HCT116 (cell line): ENCODE measurements at regions of chr6 and their contacts with region 1.

Region 1: GRCh38 chr6:12844290-12845223 is 128.0 kb downstream of the PHACTR1 start:
- DNase-seq: peak; percentile 10
- ATAC-seq: peak; percentile 57; the same call in 1 of the 2 replicates
- H3K4me3 ChIP-seq: no peak overlapping the region
- H3K27ac ChIP-seq: no peak overlapping the region
- H3K4me1 ChIP-seq: no peaks in the 10 kb centered on the region
- H3K27me3 ChIP-seq: peaks cover 41% of the 10 kb centered on the region; the same call in 1 of the 2 replicates
- CTCF ChIP-seq: peak; percentile 34 to 75 (median 53); a peak in 5 of 6 replicates
- POLR2A ChIP-seq: no peak
- RAD21 ChIP-seq: peak; percentile 32

Region 2: DNA sequence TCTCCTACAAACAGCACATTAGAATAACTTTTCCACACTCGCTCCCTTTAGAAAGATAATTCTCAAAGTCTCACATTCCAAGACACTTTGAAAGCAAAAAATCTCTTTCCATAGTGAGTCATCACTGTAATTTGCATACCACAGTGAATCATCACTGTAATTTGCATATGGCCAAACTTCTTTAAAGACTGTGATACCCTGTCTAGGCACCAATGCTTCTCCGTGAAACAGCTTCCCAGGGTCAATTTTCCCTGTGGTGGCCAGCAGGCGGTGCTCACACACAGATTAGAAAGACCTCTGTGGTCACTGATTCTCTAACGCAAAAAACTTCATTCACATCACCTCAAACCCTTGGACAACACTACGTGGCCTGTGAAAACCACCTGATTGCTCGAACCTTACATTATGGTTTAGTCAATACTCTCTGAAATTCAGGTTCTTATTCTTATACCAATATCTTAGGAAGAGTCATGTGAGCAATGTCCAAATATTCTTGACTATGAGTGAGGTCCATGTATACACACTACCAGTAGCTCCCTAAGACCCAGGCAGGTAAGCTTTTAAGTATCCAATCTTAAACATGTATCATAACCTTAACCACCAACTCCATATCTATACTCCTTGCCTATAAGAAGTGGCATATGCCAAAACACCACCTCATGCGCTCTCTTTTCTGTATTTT is 206.5 kb before region 1 on chr6:
- CTCF ChIA-PET with region 1: interaction called, 3 read pairs
- POLR2A ChIA-PET with region 1: no interaction called
- RAD21 ChIA-PET with region 1: no interaction called
- intact Hi-C with region 1: loop called (anchors 1 kb)
- DNase-seq: peak; percentile 69
- ATAC-seq: peak; percentile 99
- H3K4me3 ChIP-seq: no peak overlapping the region
- H3K27ac ChIP-seq: no peak overlapping the region
- H3K4me1 ChIP-seq: 0 out of 4 replicates have a peak, but pooled peaks cover 0 to 6% of the 10 kb centered on the region in 2 experiments
- H3K27me3 ChIP-seq: no peaks in the 10 kb centered on the region
- CTCF ChIP-seq: peak; percentile 66 to 89 (median 77)
- POLR2A ChIP-seq: no peak
- RAD21 ChIP-seq: peak; percentile 82

Region 3: DNA sequence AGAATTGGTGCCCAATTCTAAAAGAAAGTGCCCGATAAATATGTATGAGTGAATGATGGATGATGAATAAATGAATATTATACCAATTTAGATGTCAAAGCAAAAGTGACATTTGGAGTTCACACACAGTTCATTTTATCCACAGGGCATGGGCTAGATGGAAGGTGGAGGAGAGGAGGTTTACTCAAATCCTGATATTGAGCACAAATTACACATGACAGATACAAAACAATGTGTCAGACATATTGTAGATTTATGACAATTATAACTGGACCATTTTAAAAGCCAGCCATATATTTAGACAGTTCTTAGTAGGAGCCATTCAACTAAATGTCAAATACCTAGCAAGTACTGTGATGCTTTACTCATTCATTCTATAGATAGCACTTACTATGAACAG is 151.4 kb before region 1 on chr6:
- CTCF ChIA-PET with region 1: no interaction called
- POLR2A ChIA-PET with region 1: no interaction called
- RAD21 ChIA-PET with region 1: no interaction called
- intact Hi-C with region 1: no loop called
- DNase-seq: no peak
- ATAC-seq: no peak
- H3K4me3 ChIP-seq: no peak overlapping the region
- H3K27ac ChIP-seq: no peak overlapping the region
- H3K4me1 ChIP-seq: no peaks in the 10 kb centered on the region
- H3K27me3 ChIP-seq: peaks cover 41% of the 10 kb centered on the region; the same call in 1 of the 2 replicates
- CTCF ChIP-seq: no peak
- POLR2A ChIP-seq: no peak
- RAD21 ChIP-seq: no peak

Region 4: DNA sequence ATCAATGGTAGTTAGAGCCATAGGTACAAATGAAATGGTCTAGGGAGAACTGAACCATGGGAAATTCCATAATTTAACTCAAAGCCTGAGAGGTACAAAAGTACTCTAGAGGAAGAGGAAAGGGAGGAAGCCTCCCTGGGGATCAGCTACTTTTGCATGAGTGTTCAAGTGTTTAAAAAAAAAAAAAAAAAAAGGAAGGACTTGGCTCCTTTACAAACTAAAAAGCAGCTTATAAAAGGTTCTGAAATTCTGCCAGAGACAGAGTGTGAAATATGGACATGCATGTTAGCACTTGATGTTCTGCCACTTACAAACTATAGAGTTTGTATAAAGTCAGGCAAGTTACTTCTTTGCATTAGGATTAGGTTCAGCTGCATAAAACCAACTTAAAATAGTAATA is 193.8 kb after region 1 on chr6:
- CTCF ChIA-PET with region 1: no interaction called
- POLR2A ChIA-PET with region 1: no interaction called
- RAD21 ChIA-PET with region 1: no interaction called
- intact Hi-C with region 1: no loop called
- DNase-seq: no peak
- ATAC-seq: no peak
- H3K4me3 ChIP-seq: no peak overlapping the region
- H3K27ac ChIP-seq: no peak overlapping the region
- H3K4me1 ChIP-seq: no peaks in the 10 kb centered on the region
- H3K27me3 ChIP-seq: peaks cover 5% of the 10 kb centered on the region; the same call in 1 of the 2 replicates
- CTCF ChIP-seq: no peak
- POLR2A ChIP-seq: no peak
- RAD21 ChIP-seq: no peak

Region 5: DNA sequence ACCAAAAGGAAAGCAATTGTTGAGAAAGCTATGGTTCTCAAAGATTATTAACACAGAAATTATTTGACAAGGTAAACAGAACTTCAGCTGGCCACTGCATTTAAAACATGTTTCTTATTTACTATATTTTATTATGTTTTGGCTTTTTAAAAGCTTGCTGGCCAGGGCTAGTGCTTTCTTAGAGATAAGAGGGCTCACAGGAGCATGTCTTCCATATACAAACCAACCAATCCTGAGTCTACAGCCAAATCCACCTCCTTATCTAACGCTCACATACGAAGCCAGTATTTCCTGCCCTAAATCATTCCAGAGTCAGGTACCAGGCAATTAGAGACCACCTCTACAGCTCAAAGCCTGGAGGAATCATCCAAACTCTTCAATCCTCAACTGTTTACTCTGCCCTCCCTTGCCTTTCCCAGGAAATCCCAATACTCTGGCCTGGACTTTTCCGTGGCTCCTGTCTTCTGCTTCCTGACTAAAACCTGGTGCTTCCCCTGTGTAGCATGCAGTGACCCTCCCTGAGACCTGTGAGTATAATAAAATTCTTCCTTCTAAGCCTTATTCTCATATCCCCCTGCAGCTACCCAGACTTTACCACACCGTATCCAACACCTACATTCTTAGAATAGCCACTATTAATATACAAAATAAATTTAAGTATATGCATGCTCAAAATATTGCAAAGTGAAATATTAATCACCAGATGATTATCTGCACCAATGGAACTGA is 833.9 kb after region 1 on chr6:
- CTCF ChIA-PET with region 1: no interaction called
- POLR2A ChIA-PET with region 1: no interaction called
- RAD21 ChIA-PET with region 1: no interaction called
- intact Hi-C with region 1: no loop called
- DNase-seq: no peak
- ATAC-seq: no peak
- H3K4me3 ChIP-seq: no peak overlapping the region
- H3K27ac ChIP-seq: no peak overlapping the region
- H3K4me1 ChIP-seq: no peaks in the 10 kb centered on the region; a peak in 1 of 4 replicates
- H3K27me3 ChIP-seq: no peaks in the 10 kb centered on the region
- CTCF ChIP-seq: no peak
- POLR2A ChIP-seq: no peak
- RAD21 ChIP-seq: no peak